ENCODE measurements at regions of chr10 and their contacts with region 1.

Region 1: GRCh38 chr10:79542626-79543025 is 17.6 kb downstream of the SFTPA2 start:
- DNase-seq: no peak
- ATAC-seq: no peak
- H3K4me3 ChIP-seq: no peak overlapping the region
- H3K27ac ChIP-seq: no peak overlapping the region
- H3K4me1 ChIP-seq: no peaks in the 10 kb centered on the region
- H3K27me3 ChIP-seq: no peaks in the 10 kb centered on the region
- CTCF ChIP-seq: no peak
- EP300 ChIP-seq: no peak
- POLR2A ChIP-seq: no peak
- RAD21 ChIP-seq: no peak

Region 2: GRCh38 chr10:79266543-79267312 is 275.9 kb before region 1 on chr10:
- CTCF ChIA-PET with region 1: no interaction called
- POLR2A ChIA-PET with region 1: no interaction called
- in situ Hi-C with region 1: no loop called
- intact Hi-C with region 1: no loop called
- DNase-seq: no peak
- ATAC-seq: no peak
- H3K4me3 ChIP-seq: no peak overlapping the region
- H3K27ac ChIP-seq: no peak overlapping the region
- H3K4me1 ChIP-seq: peaks cover 2% of the 10 kb centered on the region
- H3K27me3 ChIP-seq: no peaks in the 10 kb centered on the region
- CTCF ChIP-seq: no peak
- EP300 ChIP-seq: no peak
- POLR2A ChIP-seq: no peak
- RAD21 ChIP-seq: no peak

Region 3: DNA sequence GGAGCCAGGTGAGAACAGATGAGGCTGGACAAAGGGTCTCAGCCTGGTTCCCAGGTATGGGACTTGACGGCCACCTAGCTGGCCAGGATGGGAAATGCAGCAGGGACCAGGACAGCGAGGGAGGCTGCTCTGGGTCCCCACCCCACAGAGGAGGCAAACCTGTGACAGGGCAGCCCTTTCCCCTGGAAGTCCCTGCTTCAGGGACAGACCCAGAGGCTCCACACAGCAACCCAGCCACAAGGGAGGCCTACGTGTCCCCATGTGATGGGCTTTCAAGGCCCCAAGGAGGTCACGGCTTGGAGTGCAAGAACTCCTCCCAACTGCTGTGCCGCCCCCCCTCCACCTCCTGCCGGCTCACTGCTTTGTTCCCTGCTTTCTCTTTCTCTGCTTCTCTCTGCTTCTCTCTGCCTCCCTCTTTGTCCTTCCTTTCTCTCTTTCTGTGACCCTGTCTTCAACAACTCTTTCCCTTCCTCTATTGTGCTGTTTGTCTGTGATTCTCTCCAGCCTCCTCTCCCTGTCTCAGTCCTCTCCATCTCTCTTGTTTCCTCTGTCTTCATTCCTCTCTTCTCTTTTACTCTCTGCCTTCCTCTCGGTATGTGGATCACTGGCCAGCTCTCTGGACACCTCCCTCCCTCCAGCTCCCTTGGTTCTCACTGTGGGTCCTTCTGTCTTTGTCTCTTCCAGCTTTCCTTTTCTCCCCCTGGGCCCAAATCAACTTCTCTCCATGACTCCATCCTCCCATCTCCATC is 39.9 kb before region 1 on chr10:
- CTCF ChIA-PET with region 1: no interaction called
- POLR2A ChIA-PET with region 1: no interaction called
- in situ Hi-C with region 1: no loop called
- intact Hi-C with region 1: no loop called
- DNase-seq: peak; percentile 26
- ATAC-seq: peak; percentile 97
- H3K4me3 ChIP-seq: no peak overlapping the region
- H3K27ac ChIP-seq: no peak overlapping the region
- H3K4me1 ChIP-seq: no peaks in the 10 kb centered on the region
- H3K27me3 ChIP-seq: peaks cover 0 to 25% of the 10 kb centered on the region in 2 experiments; a peak in 3 of 5 replicates
- CTCF ChIP-seq: peak; percentile 71
- EP300 ChIP-seq: no peak
- POLR2A ChIP-seq: no peak
- RAD21 ChIP-seq: peak; percentile 35; the same call in 1 of the 2 replicates

Region 4: GRCh38 chr10:79608505-79609375 is 66.1 kb after region 1 on chr10:
- CTCF ChIA-PET with region 1: interaction called, 10 read pairs
- POLR2A ChIA-PET with region 1: no interaction called
- in situ Hi-C with region 1: no loop called
- intact Hi-C with region 1: loop called (anchors 2 kb)
- DNase-seq: peak; percentile 46
- ATAC-seq: peak; percentile 93
- H3K4me3 ChIP-seq: no peak overlapping the region
- H3K27ac ChIP-seq: no peak overlapping the region
- H3K4me1 ChIP-seq: no peaks in the 10 kb centered on the region
- H3K27me3 ChIP-seq: peaks cover 0 to 12% of the 10 kb centered on the region in 2 experiments; a peak in 3 of 5 replicates
- CTCF ChIP-seq: peak; percentile 82
- EP300 ChIP-seq: no peak
- POLR2A ChIP-seq: no peak
- RAD21 ChIP-seq: peak; percentile 79

Measured in HepG2 (cell line).